Aorta (tissue), 5 donors: ENCODE measurements at regions of chr3 and their contacts with region 1.

Region 1: GRCh38 chr3:118884748-118885206 is 149.9 kb downstream of the IGSF11 start:
- DNase-seq: peak; percentile 70 to 88
- ATAC-seq: no peak
- H3K4me3 ChIP-seq: no peak overlapping the region
- H3K27ac ChIP-seq: no peak overlapping the region
- H3K4me1 ChIP-seq: no peaks in the 10 kb centered on the region
- H3K27me3 ChIP-seq: no peaks in the 10 kb centered on the region

Region 2: GRCh38 chr3:118744186-118744585 is 140.6 kb before region 1 on chr3:
- intact Hi-C with region 1: no loop called
- DNase-seq: no peak
- ATAC-seq: no peak
- H3K4me3 ChIP-seq: no peak overlapping the region
- H3K27ac ChIP-seq: no peak overlapping the region
- H3K4me1 ChIP-seq: no peaks in the 10 kb centered on the region
- H3K27me3 ChIP-seq: peaks cover 0 to 3% of the 10 kb centered on the region in 2 donors

Region 3: GRCh38 chr3:119034256-119035013 is 149.7 kb after region 1 on chr3 and contains the start of gene IGSF11:
- intact Hi-C with region 1: loop called (anchors 5 kb)
- DNase-seq: peak; percentile 59 to 84
- ATAC-seq: peak; percentile 86
- H3K4me3 ChIP-seq: peak within 1 kb of the TSS in 1 of 2 donors; percentile 38
- H3K27ac ChIP-seq: no peak within 1 kb of the TSS
- H3K4me1 ChIP-seq: no peaks in the 10 kb centered on the region
- H3K27me3 ChIP-seq: no peaks in the 10 kb centered on the region
- total RNA-seq, gene IGSF11: 0.42 to 0.75 TPM

Region 4: GRCh38 chr3:119098619-119099222 is 213.9 kb after region 1 on chr3:
- intact Hi-C with region 1: loop called (anchors 2 kb)
- DNase-seq: no peak
- ATAC-seq: no peak
- H3K4me3 ChIP-seq: no peak overlapping the region
- H3K27ac ChIP-seq: no peak overlapping the region
- H3K4me1 ChIP-seq: no peaks in the 10 kb centered on the region
- H3K27me3 ChIP-seq: no peaks in the 10 kb centered on the region

Region 5: GRCh38 chr3:119239206-119239820 is 354.5 kb after region 1 on chr3:
- intact Hi-C with region 1: loop called in 1 of 2 experiments (anchors 10 kb)
- DNase-seq: no peak
- ATAC-seq: no peak
- H3K4me3 ChIP-seq: peak overlapping the region; percentile 23 to 70
- H3K27ac ChIP-seq: peak overlapping the region; percentile 9 to 18
- H3K4me1 ChIP-seq: peaks cover 0 to 7% of the 10 kb centered on the region in 2 donors
- H3K27me3 ChIP-seq: no peaks in the 10 kb centered on the region